ENCODE measurements at regions of chr22 and their contacts with region 1.

Region 1: GRCh38 chr22:31107178-31107893 is at the start of gene SELENOM:
- DNase-seq: peak; percentile 94
- ATAC-seq: peak; percentile 96
- H3K4me3 Mint-ChIP-seq: peak within 1 kb of the TSS; percentile 74
- H3K27ac Mint-ChIP-seq: peak within 1 kb of the TSS; percentile 60
- H3K4me1 Mint-ChIP-seq: peaks cover 19% of the 10 kb centered on the region
- H3K27me3 Mint-ChIP-seq: no peaks in the 10 kb centered on the region
- total RNA-seq, gene SELENOM: 8.8 to 12.2 TPM

Region 2: GRCh38 chr22:31173386-31174145 is 66.2 kb after region 1 on chr22:
- CTCF ChIA-PET with region 1: no interaction called
- POLR2A ChIA-PET with region 1: no interaction called
- intact Hi-C with region 1: no loop called
- DNase-seq: peak; percentile 16
- ATAC-seq: peak; percentile 94
- H3K4me3 Mint-ChIP-seq: peak overlapping the region; percentile 29
- H3K27ac Mint-ChIP-seq: peak overlapping the region; percentile 80
- H3K4me1 Mint-ChIP-seq: peaks cover 41% of the 10 kb centered on the region
- H3K27me3 Mint-ChIP-seq: no peaks in the 10 kb centered on the region

Region 3: DNA sequence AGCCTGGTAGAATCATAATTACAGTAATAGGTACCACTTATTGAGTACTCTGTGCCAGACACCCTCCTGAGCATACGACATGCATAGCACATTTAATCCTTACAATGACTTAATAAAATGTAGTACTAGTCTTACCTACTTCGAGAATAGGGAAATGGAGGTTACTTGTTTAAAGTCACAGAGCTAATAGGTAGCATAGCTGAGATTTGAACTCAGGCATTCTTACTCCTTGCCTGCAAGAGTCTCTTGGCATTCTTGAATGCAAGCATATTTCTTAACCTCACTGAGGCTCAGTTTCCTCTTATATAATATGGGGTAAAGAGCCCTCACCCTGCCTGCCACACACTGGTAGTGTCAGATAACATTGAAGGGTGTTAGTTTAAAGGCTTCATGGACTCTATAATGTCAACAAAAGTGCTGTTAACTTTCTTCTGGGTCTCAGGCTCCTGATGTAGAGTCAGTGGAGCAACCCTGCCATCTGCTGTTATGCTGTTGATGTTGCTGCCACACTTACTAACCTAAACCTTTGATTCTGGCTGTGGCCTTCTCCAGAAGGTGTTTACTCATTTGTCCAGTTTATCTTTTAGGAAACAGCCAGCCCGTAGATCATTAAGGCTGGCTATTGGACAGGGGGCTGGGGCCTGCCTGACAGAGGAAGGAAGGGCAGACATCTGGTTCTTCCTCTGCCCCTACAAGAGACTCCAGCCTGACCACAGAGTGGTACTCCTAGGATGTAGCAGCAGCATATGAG is 123.7 kb after region 1 on chr22:
- CTCF ChIA-PET with region 1: interaction called, 6 read pairs
- POLR2A ChIA-PET with region 1: no interaction called
- intact Hi-C with region 1: loop called in 1 of 2 experiments (anchors 1 kb)
- DNase-seq: peak; percentile 57
- ATAC-seq: peak; percentile 67
- H3K4me3 Mint-ChIP-seq: no peak overlapping the region
- H3K27ac Mint-ChIP-seq: peak overlapping the region; percentile 10
- H3K4me1 Mint-ChIP-seq: peaks cover 32% of the 10 kb centered on the region
- H3K27me3 Mint-ChIP-seq: no peaks in the 10 kb centered on the region

Region 4: GRCh38 chr22:31272522-31273446 is 165.4 kb after region 1 on chr22:
- CTCF ChIA-PET with region 1: interaction called, 9 read pairs
- POLR2A ChIA-PET with region 1: no interaction called
- intact Hi-C with region 1: loop called in 1 of 2 experiments (anchors 2 kb)
- DNase-seq: peak; percentile 70
- ATAC-seq: peak; percentile 84
- H3K4me3 Mint-ChIP-seq: no peak overlapping the region
- H3K27ac Mint-ChIP-seq: no peak overlapping the region
- H3K4me1 Mint-ChIP-seq: peaks cover 51% of the 10 kb centered on the region
- H3K27me3 Mint-ChIP-seq: no peaks in the 10 kb centered on the region

Region 5: GRCh38 chr22:31313366-31314147 is 206.2 kb after region 1 on chr22:
- CTCF ChIA-PET with region 1: interaction called, 6 read pairs
- POLR2A ChIA-PET with region 1: interaction called, 11 read pairs
- intact Hi-C with region 1: no loop called
- DNase-seq: peak; percentile 82
- ATAC-seq: peak; percentile 88
- H3K4me3 Mint-ChIP-seq: no peak overlapping the region
- H3K27ac Mint-ChIP-seq: no peak overlapping the region
- H3K4me1 Mint-ChIP-seq: peaks cover 22% of the 10 kb centered on the region
- H3K27me3 Mint-ChIP-seq: no peaks in the 10 kb centered on the region

Region 6: GRCh38 chr22:31399211-31400028 is 292.1 kb after region 1 on chr22 and contains the start of gene DRG1:
- CTCF ChIA-PET with region 1: no interaction called
- POLR2A ChIA-PET with region 1: no interaction called
- intact Hi-C with region 1: loop called in 1 of 2 experiments (anchors 5 kb)
- DNase-seq: peak; percentile 99
- ATAC-seq: peak; percentile 98
- H3K4me3 Mint-ChIP-seq: peak within 1 kb of the TSS; percentile 99
- H3K27ac Mint-ChIP-seq: peak within 1 kb of the TSS; percentile 91
- H3K4me1 Mint-ChIP-seq: peaks cover 18% of the 10 kb centered on the region
- H3K27me3 Mint-ChIP-seq: peaks cover under 1% of the 10 kb centered on the region
- total RNA-seq, gene DRG1: 104 to 106 TPM